Astrocyte of the cerebellum (primary cell): ENCODE measurements at regions of chr22 and their contacts with region 1.

Region 1: GRCh38 chr22:25777870-25778269 is 35.9 kb downstream of the MYO18B start:
- DNase-seq: peak; percentile 29
- H3K4me3 ChIP-seq: no peak overlapping the region
- CTCF ChIP-seq: peak; percentile 54

Region 2: DNA sequence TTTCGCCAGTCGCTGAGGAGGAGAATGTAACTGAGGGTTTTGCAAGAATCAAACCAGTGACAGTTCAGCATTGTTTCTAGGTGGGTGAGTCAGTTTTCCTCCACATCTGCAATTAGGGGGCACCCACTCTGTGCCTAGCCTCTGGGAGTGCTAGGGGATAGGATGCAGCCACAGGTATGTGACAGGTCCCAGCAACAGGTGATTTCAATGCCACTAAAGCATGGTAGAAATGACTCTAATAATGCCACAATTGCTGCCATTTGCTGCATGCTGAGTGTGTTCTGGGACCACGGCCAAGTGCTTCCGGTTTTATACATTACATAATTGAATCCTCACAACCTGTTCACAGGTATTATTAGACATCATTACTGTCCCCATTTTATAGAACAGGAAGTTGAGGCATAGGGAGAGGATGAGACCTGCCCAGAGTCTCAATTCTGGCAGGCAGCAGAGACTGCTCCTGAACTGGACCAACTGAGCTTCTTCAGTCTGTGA is 557.9 kb before region 1 on chr22:
- in situ Hi-C with region 1: no loop called
- DNase-seq: no peak
- H3K4me3 ChIP-seq: no peak overlapping the region
- CTCF ChIP-seq: no peak

Region 3: GRCh38 chr22:25685319-25685718 is 92.6 kb before region 1 on chr22:
- in situ Hi-C with region 1: no loop called
- DNase-seq: no peak
- H3K4me3 ChIP-seq: no peak overlapping the region
- CTCF ChIP-seq: no peak

Region 4: DNA sequence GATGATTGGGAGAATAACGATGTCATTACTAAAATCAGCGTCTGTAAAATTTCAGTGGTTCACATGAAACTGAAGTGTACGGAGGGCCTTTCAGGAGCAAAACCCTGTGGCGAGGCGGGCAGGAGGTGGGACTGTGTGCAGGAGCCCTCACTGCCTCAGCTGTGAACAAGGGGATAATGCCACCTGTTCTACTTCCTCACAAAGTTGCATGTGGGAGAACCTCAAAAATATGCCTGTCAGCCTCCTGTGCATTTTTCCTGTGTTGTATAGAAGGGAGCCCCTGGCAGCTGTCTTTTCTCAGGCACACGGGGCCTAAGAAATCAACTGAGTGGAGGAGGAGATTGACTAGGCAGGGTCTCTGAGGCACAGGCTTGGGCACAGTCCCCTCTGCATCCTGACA is 78.9 kb before region 1 on chr22:
- in situ Hi-C with region 1: no loop called
- DNase-seq: no peak
- H3K4me3 ChIP-seq: no peak overlapping the region
- CTCF ChIP-seq: no peak

Region 5: DNA sequence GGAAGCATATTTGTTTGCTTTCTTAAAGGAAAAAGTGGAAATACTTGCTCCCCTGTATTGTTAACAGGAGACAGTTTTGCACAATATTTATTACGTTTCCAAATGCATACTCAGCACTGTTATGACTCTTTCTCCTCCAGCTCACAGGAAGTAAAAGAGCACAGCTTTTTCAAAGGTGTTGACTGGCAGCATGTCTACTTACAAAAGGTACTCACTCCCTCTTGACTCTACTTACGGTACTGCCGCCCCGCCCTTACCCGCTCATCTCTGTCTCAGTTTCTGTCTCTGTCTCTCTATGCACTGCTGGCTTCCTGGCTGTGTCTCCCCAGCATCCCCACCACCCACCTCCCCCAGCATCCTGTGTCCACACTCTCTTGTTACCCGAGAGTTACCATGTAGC is 68.1 kb before region 1 on chr22:
- in situ Hi-C with region 1: loop called (anchors 5 kb)
- DNase-seq: no peak
- H3K4me3 ChIP-seq: no peak overlapping the region
- CTCF ChIP-seq: no peak

Region 6: GRCh38 chr22:26330966-26331625 is 553.2 kb after region 1 on chr22:
- in situ Hi-C with region 1: loop called (anchors 10 kb)
- DNase-seq: no peak
- H3K4me3 ChIP-seq: no peak overlapping the region
- CTCF ChIP-seq: peak; percentile 87